A673 (cell line): ENCODE measurements at regions of chr2 and their contacts with region 1.

Region 1: DNA sequence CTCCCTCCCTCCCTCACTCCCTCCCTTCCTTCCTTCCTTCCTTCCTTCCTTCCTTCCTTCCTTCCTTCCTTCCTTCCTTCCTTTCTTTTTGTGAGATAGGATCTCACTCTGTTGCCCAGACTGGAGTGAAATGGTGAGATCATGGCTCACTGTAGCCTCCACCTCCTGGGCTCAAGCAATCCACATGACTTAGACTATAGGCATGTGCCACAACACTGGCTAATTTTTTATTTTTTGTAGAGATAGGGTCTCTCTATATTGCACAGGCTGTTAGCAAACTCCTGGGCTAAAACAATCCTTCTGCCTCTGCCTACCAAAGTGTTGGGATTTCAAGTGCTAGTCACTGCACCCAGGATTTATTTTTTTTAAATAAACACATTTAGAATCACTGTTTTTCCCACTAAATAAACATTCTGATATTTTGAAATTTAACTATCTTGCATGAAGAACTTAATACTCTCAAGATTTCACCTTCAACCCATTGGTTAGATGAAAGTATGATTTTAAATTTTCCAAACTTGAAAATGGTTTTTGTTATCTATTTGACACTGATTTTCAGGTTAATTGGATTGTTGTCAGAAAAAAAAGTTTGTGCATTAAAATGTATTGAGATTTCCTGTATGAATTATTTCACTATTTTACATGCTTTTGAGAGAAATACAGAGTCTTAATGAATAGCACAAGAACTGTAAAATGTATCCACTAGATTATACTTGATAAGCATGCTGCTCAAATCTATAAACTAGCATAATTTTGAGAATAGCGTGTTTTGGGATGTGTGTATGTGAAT is 745.1 kb downstream of the TSN start:
- DNase-seq: peak; percentile 96
- H3K4me3 ChIP-seq: peak overlapping the region; percentile 12
- H3K27ac ChIP-seq: peak overlapping the region; percentile 98
- H3K4me1 ChIP-seq: peaks cover 59% of the 10 kb centered on the region
- H3K27me3 ChIP-seq: no peaks in the 10 kb centered on the region
- CTCF ChIP-seq: no peak

Region 2: DNA sequence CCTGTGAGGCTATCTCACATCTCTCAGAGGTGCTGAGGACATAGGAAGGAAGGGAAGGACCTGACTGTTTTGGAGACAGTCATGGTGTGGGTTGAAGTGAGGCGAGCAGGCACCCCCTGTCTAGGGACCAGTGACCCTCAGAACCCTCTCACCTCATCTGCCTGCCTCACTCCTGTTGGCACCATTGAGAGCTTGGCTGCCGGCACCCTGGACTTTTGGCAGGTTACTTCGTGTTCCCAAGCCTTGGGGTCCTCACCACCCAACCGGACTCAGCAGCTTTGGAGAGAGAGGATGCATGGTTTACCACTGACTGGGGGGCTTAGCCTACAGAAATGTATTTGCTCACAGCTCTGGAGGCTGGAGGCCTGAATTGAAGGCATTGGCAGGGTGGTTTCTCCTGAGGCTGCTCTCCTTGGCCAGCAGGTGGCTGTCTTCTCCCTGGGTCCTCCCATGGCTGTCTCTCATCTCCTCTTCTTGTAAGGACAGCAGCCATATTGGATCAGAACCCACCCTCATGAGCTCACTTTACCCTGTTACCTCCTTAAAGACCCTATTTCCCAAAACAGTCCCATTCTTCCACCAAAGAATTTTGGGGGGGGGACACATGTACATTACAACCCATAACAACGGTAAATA is 603.1 kb before region 1 on chr2:
- CTCF ChIA-PET with region 1: no interaction called
- POLR2A ChIA-PET with region 1: no interaction called
- intact Hi-C with region 1: loop called (anchors 5 kb)
- DNase-seq: peak; percentile 90
- H3K4me3 ChIP-seq: no peak overlapping the region
- H3K27ac ChIP-seq: no peak overlapping the region
- H3K4me1 ChIP-seq: peaks cover 6% of the 10 kb centered on the region
- H3K27me3 ChIP-seq: no peaks in the 10 kb centered on the region
- CTCF ChIP-seq: peak; percentile 88

Region 3: GRCh38 chr2:122191341-122191740 is 309.2 kb before region 1 on chr2:
- CTCF ChIA-PET with region 1: no interaction called
- POLR2A ChIA-PET with region 1: interaction called, 6 read pairs
- intact Hi-C with region 1: loop called (anchors 1 kb)
- DNase-seq: peak; percentile 91
- H3K4me3 ChIP-seq: no peak overlapping the region
- H3K27ac ChIP-seq: peak overlapping the region; percentile 12
- H3K4me1 ChIP-seq: peaks cover 44% of the 10 kb centered on the region
- H3K27me3 ChIP-seq: no peaks in the 10 kb centered on the region
- CTCF ChIP-seq: peak; percentile 90

Region 4: GRCh38 chr2:122203523-122203922 is 297.0 kb before region 1 on chr2:
- CTCF ChIA-PET with region 1: no interaction called
- POLR2A ChIA-PET with region 1: interaction called, 15 read pairs
- intact Hi-C with region 1: loop called (anchors 1 kb)
- DNase-seq: peak; percentile 98
- H3K4me3 ChIP-seq: no peak overlapping the region
- H3K27ac ChIP-seq: peak overlapping the region; percentile 74
- H3K4me1 ChIP-seq: peaks cover 38% of the 10 kb centered on the region
- H3K27me3 ChIP-seq: no peaks in the 10 kb centered on the region
- CTCF ChIP-seq: peak; percentile 59

Region 5: GRCh38 chr2:122390406-122390805 is 110.1 kb before region 1 on chr2:
- CTCF ChIA-PET with region 1: no interaction called
- POLR2A ChIA-PET with region 1: no interaction called
- intact Hi-C with region 1: loop called (anchors 5 kb)
- DNase-seq: peak; percentile 87
- H3K4me3 ChIP-seq: no peak overlapping the region
- H3K27ac ChIP-seq: peak overlapping the region; percentile 83
- H3K4me1 ChIP-seq: peaks cover 40% of the 10 kb centered on the region
- H3K27me3 ChIP-seq: no peaks in the 10 kb centered on the region
- CTCF ChIP-seq: no peak